Activated CD8-positive, alpha-beta T cell treated with anti-CD3 and anti-CD28 coated beads for 36 hours (primary cell): ENCODE measurements at regions of chr16 and their contacts with region 1.

Region 1: DNA sequence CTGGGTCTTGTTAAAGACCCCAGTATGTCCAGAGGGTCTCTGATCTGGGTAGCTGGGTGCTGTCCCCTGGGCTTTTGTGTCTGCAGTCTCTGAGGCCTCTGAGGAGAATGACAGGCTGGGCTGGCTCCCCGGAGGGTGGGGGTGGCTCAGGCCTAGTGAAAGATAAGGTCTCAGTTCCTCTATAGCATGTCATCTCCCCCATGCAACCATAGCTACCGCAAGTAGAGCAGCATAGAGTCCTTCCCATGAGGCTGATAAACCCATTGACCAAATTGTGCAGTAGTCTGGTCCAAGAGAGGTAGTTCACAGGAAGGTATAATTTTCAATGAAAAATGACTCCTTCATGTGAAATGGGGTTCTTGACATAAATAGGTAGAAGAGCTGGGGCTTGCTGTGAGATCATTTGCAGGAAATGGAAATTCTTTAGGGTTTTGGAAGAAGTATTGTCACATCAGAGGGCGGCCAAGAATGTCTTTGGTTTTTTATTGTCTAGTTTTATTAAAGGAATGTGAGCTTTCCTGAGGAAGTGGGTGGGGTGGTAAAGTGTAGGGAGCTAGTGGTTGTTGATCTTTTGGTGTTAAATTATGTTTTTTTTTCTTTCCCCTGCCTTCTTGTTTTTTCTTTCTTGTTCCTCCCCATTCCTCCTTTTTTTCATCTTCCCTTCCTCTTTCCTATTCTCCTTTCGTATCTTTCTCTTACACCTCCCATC is 21.0 kb downstream of the SLC7A6OS start:
- DNase-seq: peak; percentile 89
- ATAC-seq: peak; percentile 89
- H3K4me3 Mint-ChIP-seq: peak overlapping the region; percentile 29
- H3K27ac Mint-ChIP-seq: peak overlapping the region; percentile 95
- H3K4me1 Mint-ChIP-seq: peaks cover 82% of the 10 kb centered on the region
- H3K27me3 Mint-ChIP-seq: no peaks in the 10 kb centered on the region
- CTCF ChIP-seq: no peak

Region 2: GRCh38 chr16:68270353-68270752 is 19.4 kb before region 1 on chr16:
- CTCF ChIA-PET with region 1: interaction called, 260 read pairs
- POLR2A ChIA-PET with region 1: interaction called, 27 read pairs
- intact Hi-C with region 1: loop called (anchors 2 kb)
- DNase-seq: no peak
- ATAC-seq: peak; percentile 49
- H3K4me3 Mint-ChIP-seq: peak overlapping the region; percentile 36
- H3K27ac Mint-ChIP-seq: peak overlapping the region; percentile 91
- H3K4me1 Mint-ChIP-seq: peaks cover 84% of the 10 kb centered on the region
- H3K27me3 Mint-ChIP-seq: no peaks in the 10 kb centered on the region
- CTCF ChIP-seq: no peak

Region 3: GRCh38 chr16:68275611-68276191 is 14.1 kb before region 1 on chr16:
- CTCF ChIA-PET with region 1: interaction called, 43 read pairs
- POLR2A ChIA-PET with region 1: interaction called, 24 read pairs
- intact Hi-C with region 1: loop called (anchors 2 kb)
- DNase-seq: peak; percentile 59
- ATAC-seq: peak; percentile 71
- H3K4me3 Mint-ChIP-seq: peak overlapping the region; percentile 3
- H3K27ac Mint-ChIP-seq: peak overlapping the region; percentile 96
- H3K4me1 Mint-ChIP-seq: peaks cover 70% of the 10 kb centered on the region
- H3K27me3 Mint-ChIP-seq: no peaks in the 10 kb centered on the region
- CTCF ChIP-seq: no peak

Region 4: DNA sequence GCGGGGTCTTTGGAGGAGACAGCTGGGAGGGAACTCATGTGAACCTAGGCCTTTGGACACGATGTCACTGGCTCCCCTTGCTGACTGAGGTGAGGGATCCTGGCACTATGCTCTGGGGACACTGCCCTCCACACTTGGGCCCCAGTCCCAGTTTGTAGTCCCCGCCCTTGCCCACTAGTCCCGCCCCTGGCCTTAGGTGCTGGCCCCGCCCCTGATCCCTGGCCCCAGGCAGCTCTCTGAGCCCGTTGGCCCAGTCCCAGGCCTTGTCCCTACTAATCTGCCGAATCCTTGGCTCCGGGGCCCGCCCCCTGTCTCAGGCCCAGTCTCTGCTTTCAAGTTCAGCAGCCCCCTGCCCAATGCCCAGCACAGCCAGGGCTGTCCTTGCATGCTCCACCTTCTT is 97.5 kb after region 1 on chr16:
- CTCF ChIA-PET with region 1: no interaction called
- POLR2A ChIA-PET with region 1: no interaction called
- intact Hi-C with region 1: no loop called
- DNase-seq: no peak
- ATAC-seq: no peak
- H3K4me3 Mint-ChIP-seq: no peak overlapping the region
- H3K27ac Mint-ChIP-seq: no peak overlapping the region
- H3K4me1 Mint-ChIP-seq: no peaks in the 10 kb centered on the region
- H3K27me3 Mint-ChIP-seq: no peaks in the 10 kb centered on the region
- CTCF ChIP-seq: no peak